ENCODE measurements at regions of chr17 and their contacts with region 1.

Region 1: DNA sequence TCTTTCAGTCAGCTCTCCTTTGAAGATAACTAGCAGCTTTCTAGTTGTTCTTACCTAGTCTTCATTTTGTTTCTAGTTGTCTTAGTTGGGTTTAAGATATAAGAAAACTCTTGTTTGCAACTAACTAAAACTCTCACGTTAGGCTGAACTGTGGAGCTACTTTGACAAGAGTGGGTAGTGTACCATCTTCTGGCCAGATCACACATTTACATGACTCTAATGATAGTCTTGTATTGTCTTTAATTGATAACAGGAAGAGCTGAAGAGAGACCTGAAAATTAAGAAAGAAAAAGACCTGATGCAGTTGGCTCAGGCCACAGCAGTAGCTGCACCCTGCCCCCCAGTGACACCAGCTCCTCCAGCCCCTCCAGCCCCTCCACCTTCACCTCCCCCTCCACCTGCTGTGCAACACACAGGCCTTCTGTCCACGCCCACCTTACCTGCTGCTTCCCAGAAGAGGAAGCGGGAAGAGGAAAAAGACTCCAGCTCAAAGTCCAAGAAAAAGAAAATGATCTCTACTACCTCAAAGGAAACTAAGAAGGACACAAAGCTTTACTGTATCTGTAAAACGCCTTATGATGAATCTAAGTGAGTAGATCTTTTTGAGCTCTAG is 36.9 kb downstream of the C17orf58 start:
- DNase-seq: no peak
- ATAC-seq: no peak
- H3K4me3 ChIP-seq: no peak overlapping the region
- H3K27ac ChIP-seq: no peak overlapping the region
- H3K4me1 ChIP-seq: peaks cover 0 to 2% of the 10 kb centered on the region in 2 experiments; a peak in 1 of 5 replicates
- H3K27me3 ChIP-seq: no peaks in the 10 kb centered on the region
- CTCF ChIP-seq: no peak; a peak in 1 of 6 replicates
- EP300 ChIP-seq: no peak
- POLR2A ChIP-seq: no peak
- RAD21 ChIP-seq: no peak

Region 2: DNA sequence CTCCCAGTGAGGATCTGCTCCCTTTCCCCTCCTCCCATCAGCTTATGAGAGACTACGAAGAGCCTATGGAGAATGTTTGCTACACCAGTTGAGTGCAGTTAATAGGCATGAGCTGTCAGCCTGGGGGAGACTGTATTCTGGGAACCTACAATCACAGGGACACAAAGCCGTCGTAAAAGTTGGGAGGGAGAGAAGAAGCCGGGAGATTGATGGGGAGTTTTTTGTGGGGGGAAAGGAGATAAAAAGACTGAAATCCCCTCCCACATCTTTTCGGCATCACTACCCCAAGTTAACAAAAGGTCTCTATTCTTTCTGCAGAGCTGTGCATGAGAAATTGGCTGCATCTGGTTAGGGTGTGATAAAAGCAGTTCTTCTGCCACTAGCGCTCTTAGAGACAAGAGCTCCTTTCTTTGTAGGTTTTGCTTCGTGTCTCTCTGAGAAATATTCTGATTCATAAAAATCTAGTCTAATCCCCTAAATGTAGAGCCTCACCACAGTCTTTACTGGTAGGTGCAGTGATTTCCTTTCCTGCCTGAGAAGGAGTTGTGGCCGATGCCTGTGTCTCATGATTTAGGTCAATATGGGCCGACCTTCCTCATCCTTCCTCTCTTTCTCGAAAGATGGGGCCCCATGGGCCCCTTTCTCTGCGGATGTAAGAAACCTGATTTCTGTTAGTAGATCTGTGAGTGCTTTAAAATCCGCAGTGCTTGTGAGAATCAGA is 56.7 kb before region 1 on chr17:
- CTCF ChIA-PET with region 1: no interaction called
- POLR2A ChIA-PET with region 1: no interaction called
- in situ Hi-C with region 1: no loop called
- intact Hi-C with region 1: no loop called
- DNase-seq: no peak
- ATAC-seq: peak; percentile 27; the same call in 2 of the 3 replicates
- H3K4me3 ChIP-seq: no peak overlapping the region
- H3K27ac ChIP-seq: no peak overlapping the region
- H3K4me1 ChIP-seq: no peaks in the 10 kb centered on the region
- H3K27me3 ChIP-seq: no peaks in the 10 kb centered on the region
- CTCF ChIP-seq: no peak
- EP300 ChIP-seq: no peak
- POLR2A ChIP-seq: no peak
- RAD21 ChIP-seq: no peak

Region 3: GRCh38 chr17:68759343-68760132 is 800.1 kb after region 1 on chr17:
- CTCF ChIA-PET with region 1: no interaction called
- POLR2A ChIA-PET with region 1: no interaction called
- in situ Hi-C with region 1: loop called (anchors 25 kb)
- intact Hi-C with region 1: no loop called
- DNase-seq: peak; percentile 84 to 93 (median 86)
- ATAC-seq: peak; percentile 99
- H3K4me3 ChIP-seq: peak overlapping the region; percentile 23
- H3K27ac ChIP-seq: peak overlapping the region; percentile 63
- H3K4me1 ChIP-seq: peaks cover 3 to 6% of the 10 kb centered on the region in 2 experiments; a peak in 2 of 5 replicates
- H3K27me3 ChIP-seq: no peaks in the 10 kb centered on the region; a peak in 1 of 5 replicates
- CTCF ChIP-seq: peak; percentile 84 to 96 (median 95)
- EP300 ChIP-seq: peak; percentile 3; the same call in 1 of the 2 replicates
- POLR2A ChIP-seq: no peak
- RAD21 ChIP-seq: peak; percentile 90 to 94

Measured in K562 (cell line).